ENCODE measurements at regions of chr12 and their contacts with region 1.

Region 1: DNA sequence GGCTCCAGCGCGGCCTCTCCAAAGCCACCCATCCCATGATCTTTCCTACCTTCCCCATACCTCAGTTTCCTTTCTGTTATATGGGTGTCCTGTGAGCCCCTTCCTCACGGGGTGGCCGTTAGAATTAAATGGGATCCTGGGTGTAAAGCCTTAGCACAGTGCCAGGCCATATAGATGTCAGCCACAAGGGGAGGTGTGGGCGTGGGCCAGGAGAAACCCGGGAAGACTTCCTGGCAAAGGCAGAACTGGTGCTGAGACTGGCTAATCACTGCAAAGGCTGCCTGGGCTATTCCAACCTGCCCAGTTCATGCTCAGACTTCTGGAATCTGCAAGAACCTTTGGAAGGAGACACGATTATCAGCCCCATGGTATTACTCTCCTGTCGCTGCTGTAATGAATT is 11.0 kb upstream of the NCOR2 start:
- DNase-seq: no peak
- H3K4me3 ChIP-seq: no peak overlapping the region
- CTCF ChIP-seq: no peak

Region 2: DNA sequence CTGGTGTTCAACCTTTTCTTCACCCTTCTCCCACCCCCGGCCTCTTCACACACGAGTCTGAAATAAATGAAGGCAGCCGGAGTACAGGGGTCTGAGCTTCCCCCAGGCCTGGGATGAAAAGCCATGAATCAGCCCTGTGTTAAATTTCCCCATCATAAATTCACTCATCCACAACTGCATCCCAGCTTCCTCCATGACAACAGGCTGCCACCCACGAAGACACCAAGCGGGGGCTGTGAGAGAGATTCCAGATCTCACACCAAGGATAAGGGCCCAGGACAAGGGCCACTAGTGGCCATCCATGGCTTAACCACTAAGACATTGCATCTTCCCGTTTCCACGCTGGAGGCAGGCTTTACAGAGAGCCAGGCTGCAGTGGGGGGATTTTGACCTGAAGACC is 82.9 kb after region 1 on chr12:
- in situ Hi-C with region 1: loop called (anchors 10 kb)
- DNase-seq: no peak
- H3K4me3 ChIP-seq: no peak overlapping the region
- CTCF ChIP-seq: peak; percentile 9